ENCODE measurements at regions of chr11 and their contacts with region 1.

Region 1: DNA sequence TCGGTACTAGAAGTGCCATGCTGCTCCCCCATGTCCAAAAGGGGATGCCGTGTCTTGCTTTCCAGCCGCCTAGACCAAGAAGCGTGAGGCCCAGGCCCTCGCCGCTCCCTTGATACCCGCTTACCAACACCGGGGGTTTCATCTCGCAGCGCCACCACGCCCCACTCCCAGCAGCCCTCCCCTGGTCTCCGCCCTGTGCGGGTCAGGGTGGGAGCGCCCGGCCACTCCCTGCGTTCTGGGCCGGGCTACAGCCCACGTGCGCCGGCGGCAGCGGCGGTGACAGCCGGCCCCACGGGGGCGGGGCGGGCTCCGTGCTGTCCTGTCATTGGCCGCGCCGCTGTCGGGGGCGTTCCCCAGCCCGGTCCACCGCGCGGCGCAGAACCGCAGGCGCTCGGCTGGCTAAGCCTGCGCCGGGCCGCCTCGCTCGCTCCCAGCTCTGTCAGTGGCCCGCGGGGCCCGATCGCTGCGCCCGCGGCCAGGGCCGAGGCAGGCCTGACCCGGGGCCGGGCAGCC is at the start of gene MICAL2:
- DNase-seq: peak; percentile 96
- total RNA-seq, gene MICAL2: 98.7 TPM

Region 2: GRCh38 chr11:11987503-11988022 is 122.7 kb before region 1 on chr11:
- intact Hi-C with region 1: no loop called
- DNase-seq: no peak

Region 3: DNA sequence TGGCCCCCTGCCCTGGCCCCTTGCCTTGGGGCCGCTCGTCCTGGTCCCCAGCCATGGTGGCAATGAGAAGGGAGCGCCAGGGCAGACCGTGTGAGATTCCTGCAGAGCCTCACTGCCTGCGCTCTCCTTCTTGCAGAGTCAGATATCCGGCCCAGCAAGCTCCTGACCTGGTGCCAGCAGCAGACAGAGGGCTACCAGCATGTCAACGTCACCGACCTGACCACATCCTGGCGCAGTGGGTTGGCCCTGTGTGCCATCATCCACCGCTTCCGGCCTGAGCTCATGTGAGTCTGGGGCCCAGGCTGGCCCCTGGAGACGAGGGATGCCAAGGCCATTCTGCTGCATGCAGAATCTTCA is 114.3 kb after region 1 on chr11:
- intact Hi-C with region 1: loop called (anchors 5 kb)
- DNase-seq: peak; percentile 93